ENCODE measurements at regions of chr19 and their contacts with region 1.

Region 1: GRCh38 chr19:40633207-40633606 is 32.0 kb downstream of the LTBP4 start:
- DNase-seq: no peak
- ATAC-seq: no peak
- H3K4me3 ChIP-seq: no peak overlapping the region
- H3K4me3 Mint-ChIP-seq: no peak overlapping the region
- H3K27ac ChIP-seq: no peak overlapping the region
- H3K27ac Mint-ChIP-seq: no peak overlapping the region
- H3K4me1 ChIP-seq: peaks cover 9% of the 10 kb centered on the region
- H3K4me1 Mint-ChIP-seq: peaks cover 15% of the 10 kb centered on the region
- H3K27me3 ChIP-seq: no peaks in the 10 kb centered on the region
- H3K27me3 Mint-ChIP-seq: no peaks in the 10 kb centered on the region
- CTCF ChIP-seq: no peak

Region 2: DNA sequence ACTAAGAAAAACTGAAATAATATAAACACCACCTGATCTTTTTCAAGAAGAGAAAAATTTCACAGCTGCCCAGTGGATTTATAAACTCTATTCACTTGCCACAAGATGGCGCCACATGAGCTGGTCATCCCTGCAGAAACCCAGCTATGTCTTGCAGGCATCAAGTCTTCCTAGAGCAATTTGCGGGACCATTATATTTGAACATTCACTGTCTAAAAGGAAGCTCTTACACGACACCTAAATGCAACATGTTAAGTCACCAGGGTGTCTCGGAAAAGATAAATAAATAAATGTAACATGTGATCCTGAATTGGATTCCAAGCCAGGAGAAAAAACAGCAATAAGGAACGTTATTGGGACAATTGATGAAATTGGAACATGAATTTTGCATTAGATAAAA is 327.8 kb before region 1 on chr19:
- CTCF ChIA-PET with region 1: interaction called, 20 read pairs
- POLR2A ChIA-PET with region 1: no interaction called
- intact Hi-C with region 1: loop called in 1 of 2 experiments (anchors 1 kb)
- DNase-seq: peak; percentile 49 to 86 (median 69)
- ATAC-seq: no peak
- H3K4me3 ChIP-seq: no peak overlapping the region
- H3K4me3 Mint-ChIP-seq: no peak overlapping the region
- H3K27ac ChIP-seq: no peak overlapping the region
- H3K27ac Mint-ChIP-seq: no peak overlapping the region
- H3K4me1 ChIP-seq: no peaks in the 10 kb centered on the region
- H3K4me1 Mint-ChIP-seq: no peaks in the 10 kb centered on the region
- H3K27me3 ChIP-seq: no peaks in the 10 kb centered on the region
- H3K27me3 Mint-ChIP-seq: no peaks in the 10 kb centered on the region
- CTCF ChIP-seq: peak; percentile 78

Region 3: GRCh38 chr19:40542202-40542859 is 90.9 kb before region 1 on chr19:
- CTCF ChIA-PET with region 1: interaction called, 23 read pairs
- POLR2A ChIA-PET with region 1: interaction called, 3 read pairs
- intact Hi-C with region 1: no loop called
- DNase-seq: no peak
- ATAC-seq: no peak
- H3K4me3 ChIP-seq: no peak overlapping the region
- H3K4me3 Mint-ChIP-seq: no peak overlapping the region
- H3K27ac ChIP-seq: no peak overlapping the region
- H3K27ac Mint-ChIP-seq: no peak overlapping the region
- H3K4me1 ChIP-seq: no peaks in the 10 kb centered on the region
- H3K4me1 Mint-ChIP-seq: no peaks in the 10 kb centered on the region
- H3K27me3 ChIP-seq: no peaks in the 10 kb centered on the region
- H3K27me3 Mint-ChIP-seq: peaks cover 10% of the 10 kb centered on the region
- CTCF ChIP-seq: no peak

Region 4: GRCh38 chr19:40570313-40571004 is 62.7 kb before region 1 on chr19:
- CTCF ChIA-PET with region 1: interaction called, 14 read pairs
- POLR2A ChIA-PET with region 1: no interaction called
- intact Hi-C with region 1: no loop called
- DNase-seq: peak; percentile 88 to 100 (median 96)
- ATAC-seq: peak; percentile 86
- H3K4me3 ChIP-seq: peak overlapping the region; percentile 40
- H3K4me3 Mint-ChIP-seq: peak overlapping the region; percentile 80
- H3K27ac ChIP-seq: peak overlapping the region in 1 of 2 donors; percentile 9
- H3K27ac Mint-ChIP-seq: peak overlapping the region; percentile 22
- H3K4me1 ChIP-seq: peaks cover 35% of the 10 kb centered on the region
- H3K4me1 Mint-ChIP-seq: peaks cover 27% of the 10 kb centered on the region
- H3K27me3 ChIP-seq: peaks cover 21 to 22% of the 10 kb centered on the region in 2 experiments
- H3K27me3 Mint-ChIP-seq: peaks cover 34% of the 10 kb centered on the region
- CTCF ChIP-seq: no peak

Region 5: DNA sequence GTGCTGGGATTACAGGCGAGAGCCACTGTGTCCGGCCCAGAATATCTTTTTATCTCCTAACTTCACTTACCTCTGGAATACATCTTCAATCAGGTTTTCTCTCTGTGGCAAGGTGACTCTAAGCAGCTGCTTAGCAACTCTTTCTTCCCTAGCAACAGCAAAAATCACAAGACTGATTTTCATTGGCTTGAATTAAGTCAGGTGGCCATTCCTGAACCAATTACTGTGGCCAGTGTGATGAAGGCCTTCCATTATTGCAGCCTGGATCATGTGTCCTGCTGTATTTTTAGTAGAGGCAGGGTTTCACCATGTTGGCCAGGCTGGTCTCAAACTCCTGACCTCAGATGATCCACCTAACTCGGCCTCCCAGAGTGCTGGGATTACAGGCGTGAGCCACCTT is 41.0 kb before region 1 on chr19:
- CTCF ChIA-PET with region 1: no interaction called
- POLR2A ChIA-PET with region 1: no interaction called
- intact Hi-C with region 1: no loop called
- DNase-seq: peak in 3 of 14 experiments; percentile 61 to 67 (median 64)
- ATAC-seq: peak; percentile 80
- H3K4me3 ChIP-seq: no peak overlapping the region
- H3K4me3 Mint-ChIP-seq: no peak overlapping the region
- H3K27ac ChIP-seq: no peak overlapping the region
- H3K27ac Mint-ChIP-seq: no peak overlapping the region
- H3K4me1 ChIP-seq: peaks cover 17% of the 10 kb centered on the region
- H3K4me1 Mint-ChIP-seq: peaks cover 13% of the 10 kb centered on the region
- H3K27me3 ChIP-seq: peaks cover 5 to 9% of the 10 kb centered on the region in 2 experiments
- H3K27me3 Mint-ChIP-seq: peaks cover 12% of the 10 kb centered on the region
- CTCF ChIP-seq: no peak

Region 6: DNA sequence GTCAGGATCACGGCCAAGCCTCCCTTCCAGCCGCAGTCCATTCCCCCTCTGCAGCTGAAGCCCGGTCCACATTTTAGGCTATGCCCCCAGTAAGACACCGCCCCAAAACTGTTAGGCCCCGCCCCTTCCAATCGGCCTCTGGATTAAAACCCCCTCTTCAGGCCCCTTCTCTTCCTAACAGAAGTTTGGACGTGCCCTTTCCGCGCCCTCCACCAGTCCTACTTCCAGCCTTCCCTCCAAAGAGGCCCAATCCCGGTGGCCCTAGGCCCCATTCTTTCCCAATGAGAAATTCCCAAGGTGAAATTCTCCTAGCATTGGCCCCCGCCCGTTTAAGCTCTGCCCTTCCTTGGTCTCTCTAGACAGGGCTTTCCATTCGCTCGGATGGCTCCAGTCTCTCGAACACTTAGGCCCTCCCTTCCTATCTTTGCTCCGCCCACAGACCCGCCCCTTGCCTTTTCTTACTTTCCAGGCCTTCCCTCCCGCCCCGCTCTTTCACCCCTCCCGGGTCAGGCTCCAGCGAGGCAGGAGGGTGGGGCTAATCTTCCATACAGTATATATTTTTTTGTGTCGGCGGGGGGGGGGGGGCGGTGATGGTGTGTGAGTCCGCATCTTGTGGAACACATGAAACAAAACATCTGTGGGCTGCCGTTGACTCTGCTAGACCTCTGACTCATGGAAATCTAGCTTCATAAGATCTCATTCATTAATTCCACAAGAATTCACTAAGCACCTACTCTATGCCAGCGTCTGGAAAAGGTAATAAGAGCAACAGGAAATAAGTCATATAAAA is 18.4 kb before region 1 on chr19:
- CTCF ChIA-PET with region 1: interaction called, 26 read pairs
- POLR2A ChIA-PET with region 1: interaction called, 5 read pairs
- intact Hi-C with region 1: no loop called
- DNase-seq: peak; percentile 53 to 93 (median 78)
- ATAC-seq: peak; percentile 19
- H3K4me3 ChIP-seq: peak overlapping the region; percentile 82
- H3K4me3 Mint-ChIP-seq: peak overlapping the region; percentile 93
- H3K27ac ChIP-seq: peak overlapping the region in 1 of 2 donors; percentile 55
- H3K27ac Mint-ChIP-seq: peak overlapping the region; percentile 95
- H3K4me1 ChIP-seq: peaks cover 63% of the 10 kb centered on the region
- H3K4me1 Mint-ChIP-seq: peaks cover 53% of the 10 kb centered on the region
- H3K27me3 ChIP-seq: no peaks in the 10 kb centered on the region
- H3K27me3 Mint-ChIP-seq: no peaks in the 10 kb centered on the region
- CTCF ChIP-seq: no peak